KBM-7 (cell line): ENCODE measurements at regions of chr18 and their contacts with region 1.

Region 1: DNA sequence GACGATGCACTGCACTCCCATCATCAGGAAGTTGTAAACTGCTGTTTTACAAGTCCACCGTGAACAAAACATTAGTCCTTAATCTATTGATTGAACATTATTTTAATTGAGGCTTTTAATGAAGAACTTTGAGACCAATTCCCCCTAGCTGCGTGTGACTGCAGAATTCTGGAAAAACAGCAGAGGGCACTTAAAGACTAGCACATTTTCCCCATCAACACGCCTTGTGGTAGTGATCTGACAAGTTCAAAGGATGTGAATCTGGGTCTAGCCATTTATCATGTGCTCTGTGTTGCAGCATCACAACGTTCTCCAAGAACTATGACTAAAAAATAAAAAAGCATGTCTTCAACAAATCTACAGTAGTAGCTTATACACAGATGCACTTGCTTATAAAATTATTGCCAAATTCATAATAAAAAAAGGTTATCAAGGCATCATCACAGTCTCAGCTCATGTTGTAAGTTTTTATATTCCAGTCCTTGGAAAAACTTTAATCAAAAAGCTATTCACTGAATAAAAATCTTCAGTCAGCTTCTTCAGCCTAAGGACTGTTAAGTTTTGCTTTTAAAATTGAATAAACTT is 35.8 kb downstream of the SKOR2 start:
- DNase-seq: peak; percentile 60

Region 2: GRCh38 chr18:47748847-47749599 is 533.4 kb after region 1 on chr18:
- in situ Hi-C with region 1: loop called (anchors 25 kb)
- DNase-seq: peak; percentile 79